IMR-90 (cell line): ENCODE measurements at regions of chrX and their contacts with region 1.

Region 1: DNA sequence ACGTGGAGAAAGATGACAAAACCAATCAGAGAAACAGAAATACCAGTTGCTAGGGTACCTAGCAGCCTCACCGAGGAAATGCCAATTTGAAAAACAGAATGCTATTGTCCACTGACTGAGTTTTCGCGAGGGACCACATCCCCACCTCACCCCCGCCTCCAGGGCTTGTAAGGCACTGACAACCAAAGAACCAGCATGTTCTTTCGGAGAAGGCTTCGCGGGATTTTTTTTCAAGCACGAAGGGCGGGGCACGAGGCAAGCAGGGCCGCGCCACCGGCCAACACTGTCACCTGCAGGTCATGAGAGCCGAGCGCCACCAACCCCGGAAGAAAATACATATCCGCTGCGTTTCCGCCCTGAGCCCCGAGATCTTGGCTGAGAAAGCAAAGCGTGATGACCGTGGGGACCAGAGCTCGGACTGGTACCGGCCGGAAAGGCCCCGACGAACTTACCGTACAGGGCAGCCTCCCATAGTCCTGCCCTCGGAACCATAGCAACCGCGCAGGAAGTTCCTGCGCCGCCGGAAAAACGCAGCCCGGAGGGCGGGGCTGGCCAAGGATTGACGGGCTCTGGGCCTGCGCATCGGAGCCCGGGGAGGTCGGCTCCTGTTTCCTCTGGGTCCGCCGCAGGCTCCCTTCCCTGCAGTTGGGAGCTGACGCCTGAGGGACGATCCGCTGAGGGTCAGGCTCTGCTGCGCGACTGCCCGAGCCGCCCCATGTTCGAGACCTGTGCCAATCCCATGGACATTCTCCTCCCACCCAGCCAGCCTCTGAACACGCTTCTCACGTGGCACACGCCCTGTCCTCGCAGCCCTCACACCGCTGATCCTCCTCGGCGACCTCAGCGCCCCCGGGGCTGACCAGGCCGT is 59.2 kb upstream of the PAGE5 start:
- DNase-seq: peak; percentile 84
- ATAC-seq: peak; percentile 99
- H3K4me3 ChIP-seq: peak overlapping the region; percentile 87
- H3K27ac ChIP-seq: peak overlapping the region; percentile 93
- H3K4me1 ChIP-seq: no peaks in the 10 kb centered on the region
- H3K27me3 ChIP-seq: no peaks in the 10 kb centered on the region
- CTCF ChIP-seq: peak; percentile 32; the same call in 1 of the 2 replicates
- POLR2A ChIP-seq: no peak
- RAD21 ChIP-seq: peak; percentile 31; the same call in 1 of the 2 replicates

Region 2: GRCh38 chrX:53768451-53768850 is 1392.5 kb before region 1 on chrX:
- CTCF ChIA-PET with region 1: no interaction called
- POLR2A ChIA-PET with region 1: no interaction called
- dilution Hi-C with region 1: no loop called
- in situ Hi-C with region 1: no loop called
- intact Hi-C with region 1: no loop called
- DNase-seq: no peak
- ATAC-seq: no peak
- H3K4me3 ChIP-seq: no peak overlapping the region
- H3K27ac ChIP-seq: no peak overlapping the region
- H3K4me1 ChIP-seq: no peaks in the 10 kb centered on the region
- H3K27me3 ChIP-seq: no peaks in the 10 kb centered on the region; the same call in 1 of the 2 replicates
- CTCF ChIP-seq: no peak
- POLR2A ChIP-seq: no peak
- RAD21 ChIP-seq: no peak

Region 3: GRCh38 chrX:54808605-54809483 is 352.1 kb before region 1 on chrX:
- CTCF ChIA-PET with region 1: no interaction called
- POLR2A ChIA-PET with region 1: no interaction called
- dilution Hi-C with region 1: no loop called
- in situ Hi-C with region 1: no loop called
- intact Hi-C with region 1: loop called (anchors 5 kb)
- DNase-seq: peak; percentile 96
- ATAC-seq: peak; percentile 92
- H3K4me3 ChIP-seq: peak overlapping the region; percentile 84
- H3K27ac ChIP-seq: peak overlapping the region; percentile 90
- H3K4me1 ChIP-seq: peaks cover 7% of the 10 kb centered on the region; the same call in 1 of the 2 replicates
- H3K27me3 ChIP-seq: peaks cover 8% of the 10 kb centered on the region; the same call in 1 of the 2 replicates
- CTCF ChIP-seq: no peak
- POLR2A ChIP-seq: no peak
- RAD21 ChIP-seq: no peak

Region 4: GRCh38 chrX:54909941-54910340 is 251.0 kb before region 1 on chrX:
- CTCF ChIA-PET with region 1: no interaction called
- POLR2A ChIA-PET with region 1: no interaction called
- dilution Hi-C with region 1: no loop called
- in situ Hi-C with region 1: no loop called
- intact Hi-C with region 1: loop called (anchors 5 kb)
- DNase-seq: no peak
- ATAC-seq: no peak
- H3K4me3 ChIP-seq: no peak overlapping the region
- H3K27ac ChIP-seq: no peak overlapping the region
- H3K4me1 ChIP-seq: no peaks in the 10 kb centered on the region
- H3K27me3 ChIP-seq: no peaks in the 10 kb centered on the region
- CTCF ChIP-seq: no peak
- POLR2A ChIP-seq: no peak
- RAD21 ChIP-seq: no peak

Region 5: DNA sequence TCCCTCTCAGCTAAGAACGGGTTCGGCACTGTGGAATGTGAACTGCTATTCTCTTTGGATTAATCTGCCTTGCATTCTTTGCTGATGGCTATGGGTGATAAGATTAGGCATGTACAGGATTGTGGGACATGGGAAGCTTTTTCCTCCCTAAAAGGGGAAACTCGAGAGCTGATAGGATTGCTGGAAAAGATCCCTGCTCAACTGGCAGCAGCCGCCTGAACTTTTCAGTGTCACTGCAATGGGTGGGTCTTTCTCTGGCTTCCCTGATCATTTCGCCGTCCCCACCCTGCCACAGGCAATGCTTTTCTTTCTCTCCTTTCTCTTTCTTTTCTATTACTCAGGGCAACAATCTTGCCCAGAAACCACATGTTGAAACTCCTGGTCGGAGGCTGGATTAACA is 51.6 kb before region 1 on chrX:
- CTCF ChIA-PET with region 1: no interaction called
- POLR2A ChIA-PET with region 1: no interaction called
- dilution Hi-C with region 1: no loop called
- in situ Hi-C with region 1: no loop called
- intact Hi-C with region 1: no loop called
- DNase-seq: no peak
- ATAC-seq: no peak
- H3K4me3 ChIP-seq: no peak overlapping the region
- H3K27ac ChIP-seq: no peak overlapping the region
- H3K4me1 ChIP-seq: no peaks in the 10 kb centered on the region
- H3K27me3 ChIP-seq: no peaks in the 10 kb centered on the region
- CTCF ChIP-seq: no peak
- POLR2A ChIP-seq: no peak
- RAD21 ChIP-seq: no peak

Region 6: GRCh38 chrX:55135171-55135570 is 25.7 kb before region 1 on chrX:
- CTCF ChIA-PET with region 1: no interaction called
- POLR2A ChIA-PET with region 1: no interaction called
- dilution Hi-C with region 1: no loop called
- in situ Hi-C with region 1: no loop called
- intact Hi-C with region 1: loop called (anchors 2 kb)
- DNase-seq: peak; percentile 31
- ATAC-seq: peak; percentile 70
- H3K4me3 ChIP-seq: no peak overlapping the region
- H3K27ac ChIP-seq: no peak overlapping the region
- H3K4me1 ChIP-seq: no peaks in the 10 kb centered on the region
- H3K27me3 ChIP-seq: peaks cover 8% of the 10 kb centered on the region
- CTCF ChIP-seq: peak; percentile 59
- POLR2A ChIP-seq: no peak
- RAD21 ChIP-seq: peak; percentile 73

Region 7: DNA sequence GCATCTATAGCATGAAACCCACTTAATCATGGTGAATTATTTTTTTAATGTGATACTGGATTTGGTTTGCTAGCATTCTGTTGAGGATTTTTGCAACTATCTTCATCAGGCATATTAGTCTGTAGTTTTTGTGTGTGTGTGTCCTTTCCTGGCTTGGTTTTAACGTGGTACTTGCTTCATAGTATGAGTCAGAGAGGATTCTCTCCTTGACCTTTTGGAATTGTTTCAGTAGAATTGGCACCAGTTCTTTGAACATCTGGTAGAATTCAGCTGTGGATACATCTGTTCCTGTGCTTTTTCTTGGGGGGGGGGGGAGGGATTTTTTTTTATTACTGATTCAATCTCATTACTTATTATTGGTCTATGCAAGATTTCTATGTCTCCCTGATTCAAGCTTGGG is 839.3 kb after region 1 on chrX:
- CTCF ChIA-PET with region 1: no interaction called
- POLR2A ChIA-PET with region 1: interaction called, 10 read pairs
- dilution Hi-C with region 1: no loop called
- in situ Hi-C with region 1: no loop called
- intact Hi-C with region 1: no loop called
- DNase-seq: no peak
- ATAC-seq: no peak
- H3K4me3 ChIP-seq: no peak overlapping the region
- H3K27ac ChIP-seq: no peak overlapping the region
- H3K4me1 ChIP-seq: no peaks in the 10 kb centered on the region
- H3K27me3 ChIP-seq: no peaks in the 10 kb centered on the region
- CTCF ChIP-seq: no peak
- POLR2A ChIP-seq: no peak
- RAD21 ChIP-seq: no peak

Region 8: DNA sequence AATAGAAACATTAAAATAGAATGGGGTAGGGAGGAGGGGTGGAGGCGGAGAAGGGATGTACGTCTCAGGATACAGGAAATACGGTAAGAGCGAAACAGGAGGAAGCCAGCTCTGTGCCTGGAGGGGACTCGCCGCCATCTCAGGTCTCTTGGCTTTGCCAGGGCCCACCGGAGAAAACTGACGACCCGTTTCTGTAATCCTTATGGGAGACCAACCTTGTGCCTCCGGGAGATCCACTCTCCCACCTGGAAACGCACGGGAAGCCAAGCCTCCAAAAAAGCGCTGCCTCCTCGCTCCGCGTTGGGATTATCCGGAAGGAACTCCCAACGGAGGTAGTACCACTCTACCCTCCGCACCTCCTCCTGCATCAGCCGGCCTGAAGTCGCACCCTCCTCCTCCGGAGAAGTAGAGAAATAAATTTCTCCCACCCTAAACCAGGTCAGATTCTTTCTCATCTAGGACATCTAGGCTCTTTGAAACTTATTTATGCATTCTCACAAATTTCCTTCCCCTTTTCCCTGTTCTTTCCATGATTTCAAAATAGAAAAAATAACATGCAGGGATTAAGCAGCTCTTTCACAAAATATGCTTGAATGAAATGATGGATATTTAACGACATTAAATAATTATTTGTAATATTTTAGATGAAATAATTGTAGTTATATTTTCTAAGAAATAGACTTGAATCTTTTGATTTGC is 1568.4 kb after region 1 on chrX and contains the start of gene NBDY:
- CTCF ChIA-PET with region 1: no interaction called
- POLR2A ChIA-PET with region 1: no interaction called
- dilution Hi-C with region 1: no loop called
- in situ Hi-C with region 1: loop called (anchors 25 kb)
- intact Hi-C with region 1: no loop called
- DNase-seq: peak; percentile 37
- ATAC-seq: peak; percentile 93
- H3K4me3 ChIP-seq: peak within 1 kb of the TSS; percentile 99
- H3K27ac ChIP-seq: peak within 1 kb of the TSS; percentile 100
- H3K4me1 ChIP-seq: no peaks in the 10 kb centered on the region
- H3K27me3 ChIP-seq: no peaks in the 10 kb centered on the region
- CTCF ChIP-seq: no peak
- POLR2A ChIP-seq: peak; percentile 56; the same call in 1 of the 2 replicates
- RAD21 ChIP-seq: no peak
- total RNA-seq, gene NBDY: 2.5 and 3.2 TPM in 2 replicates